CD4-positive, alpha-beta memory T cell (primary cell): ENCODE measurements at regions of chr14 and their contacts with region 1.

Region 1: DNA sequence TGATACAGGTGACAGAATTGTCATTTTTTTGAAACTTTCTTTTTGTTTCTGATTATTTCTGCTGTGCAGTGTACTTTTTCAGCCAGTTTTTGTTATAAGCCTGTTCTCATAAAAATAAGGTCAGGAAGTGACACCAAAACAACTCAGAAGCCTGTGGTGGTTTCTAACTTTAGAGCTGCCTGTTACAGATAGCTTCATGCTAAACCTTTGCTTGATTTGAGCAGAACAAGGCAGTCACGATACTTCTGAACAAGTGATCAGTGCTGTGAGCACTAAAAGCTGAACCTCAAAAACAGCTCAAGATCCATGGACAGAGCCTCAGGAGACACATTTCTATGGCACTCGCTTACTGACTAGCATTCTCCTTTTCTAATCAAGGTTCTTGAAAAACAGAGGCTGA is 82.0 kb downstream of the PRKCH start:
- DNase-seq: peak; percentile 49 to 69 (median 59)
- H3K4me3 ChIP-seq: no peak overlapping the region
- H3K4me3 Mint-ChIP-seq: peak overlapping the region; percentile 59 to 88 (median 70)
- H3K27ac ChIP-seq: peak overlapping the region; percentile 52
- H3K27ac Mint-ChIP-seq: peak overlapping the region; percentile 65 to 97 (median 93)
- H3K4me1 ChIP-seq: peaks cover 96% of the 10 kb centered on the region
- H3K4me1 Mint-ChIP-seq: peaks cover 65 to 90% (median 78%) of the 10 kb centered on the region in 4 donors
- H3K27me3 ChIP-seq: no peaks in the 10 kb centered on the region
- H3K27me3 Mint-ChIP-seq: no peaks in the 10 kb centered on the region

Region 2: GRCh38 chr14:61335671-61336275 is 67.6 kb before region 1 on chr14:
- CTCF ChIA-PET with region 1: interaction called, 8 read pairs
- POLR2A ChIA-PET with region 1: interaction called, 21 read pairs
- intact Hi-C with region 1: no loop called
- DNase-seq: peak; percentile 65 to 78 (median 73)
- H3K4me3 ChIP-seq: peak overlapping the region; percentile 2 to 25
- H3K4me3 Mint-ChIP-seq: peak overlapping the region; percentile 78 to 87 (median 84)
- H3K27ac ChIP-seq: peak overlapping the region; percentile 84
- H3K27ac Mint-ChIP-seq: peak overlapping the region; percentile 93 to 100 (median 99)
- H3K4me1 ChIP-seq: peaks cover 94% of the 10 kb centered on the region
- H3K4me1 Mint-ChIP-seq: peaks cover 70 to 85% (median 78%) of the 10 kb centered on the region in 4 donors
- H3K27me3 ChIP-seq: no peaks in the 10 kb centered on the region
- H3K27me3 Mint-ChIP-seq: no peaks in the 10 kb centered on the region

Region 3: DNA sequence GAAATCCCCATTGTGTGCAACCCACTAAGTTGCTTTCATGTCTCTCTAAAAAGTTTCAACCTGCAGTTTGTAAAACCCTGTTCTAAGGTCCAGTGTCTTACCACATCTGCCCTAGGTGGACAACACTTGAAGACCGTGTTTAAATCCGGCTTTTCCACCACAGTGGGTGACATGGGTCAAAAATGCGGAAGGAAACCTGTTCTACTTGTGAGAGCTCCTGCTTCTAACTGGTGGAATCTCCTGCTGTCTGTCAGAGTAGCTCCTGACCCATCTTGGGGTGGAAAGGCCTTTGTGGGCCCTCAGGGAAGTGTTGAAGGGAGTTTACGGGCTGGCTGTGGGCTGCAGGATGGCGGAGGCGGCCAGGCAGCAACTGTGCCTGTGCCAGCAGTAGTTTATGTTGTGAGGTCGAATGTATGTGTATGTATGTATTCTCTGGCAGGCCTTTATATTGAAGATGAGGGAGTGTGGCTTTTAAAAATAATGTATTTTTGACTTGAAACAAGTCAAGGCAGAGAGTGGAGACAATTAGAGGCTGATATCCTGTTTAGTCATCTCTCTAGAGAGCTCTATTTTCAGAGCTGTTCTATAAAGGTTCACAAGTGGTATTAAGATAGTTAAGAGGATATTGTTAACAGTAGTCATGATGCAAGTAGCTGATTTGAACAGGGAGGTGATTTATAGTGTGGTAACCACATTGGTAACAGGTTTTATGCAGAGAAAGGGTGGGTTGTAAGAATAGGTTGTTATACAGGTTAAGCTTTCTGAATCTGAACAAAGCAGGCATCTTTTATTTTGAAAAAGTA is 15.0 kb before region 1 on chr14:
- CTCF ChIA-PET with region 1: interaction called, 22 read pairs
- POLR2A ChIA-PET with region 1: interaction called, 85 read pairs
- intact Hi-C with region 1: loop called (anchors 1 kb)
- DNase-seq: peak; percentile 50 to 69 (median 61)
- H3K4me3 ChIP-seq: peak overlapping the region in 1 of 2 donors; percentile 26
- H3K4me3 Mint-ChIP-seq: peak overlapping the region in 2 of 8 donors; percentile 72 to 78
- H3K27ac ChIP-seq: peak overlapping the region; percentile 65
- H3K27ac Mint-ChIP-seq: no peak overlapping the region
- H3K4me1 ChIP-seq: peaks cover 100% of the 10 kb centered on the region
- H3K4me1 Mint-ChIP-seq: peaks cover 0 to 50% (median 20%) of the 10 kb centered on the region in 4 donors
- H3K27me3 ChIP-seq: no peaks in the 10 kb centered on the region
- H3K27me3 Mint-ChIP-seq: no peaks in the 10 kb centered on the region

Region 4: GRCh38 chr14:61420326-61420725 is 16.9 kb after region 1 on chr14:
- CTCF ChIA-PET with region 1: interaction called, 4 read pairs
- POLR2A ChIA-PET with region 1: interaction called, 6 read pairs
- intact Hi-C with region 1: loop called (anchors 2 kb)
- DNase-seq: peak in 1 of 5 donors; percentile 65
- H3K4me3 ChIP-seq: no peak overlapping the region
- H3K4me3 Mint-ChIP-seq: peak overlapping the region in 7 of 8 donors; percentile 25 to 74 (median 45)
- H3K27ac ChIP-seq: no peak overlapping the region
- H3K27ac Mint-ChIP-seq: peak overlapping the region in 6 of 7 donors; percentile 54 to 82 (median 71)
- H3K4me1 ChIP-seq: peaks cover 100% of the 10 kb centered on the region
- H3K4me1 Mint-ChIP-seq: peaks cover 5 to 82% (median 42%) of the 10 kb centered on the region in 4 donors
- H3K27me3 ChIP-seq: no peaks in the 10 kb centered on the region
- H3K27me3 Mint-ChIP-seq: no peaks in the 10 kb centered on the region

Region 5: GRCh38 chr14:61438860-61439684 is 35.7 kb after region 1 on chr14:
- CTCF ChIA-PET with region 1: interaction called, 3 read pairs
- POLR2A ChIA-PET with region 1: interaction called, 6 read pairs
- intact Hi-C with region 1: loop called (anchors 5 kb)
- DNase-seq: peak; percentile 36 to 74 (median 42)
- H3K4me3 ChIP-seq: peak overlapping the region in 1 of 2 donors; percentile 26
- H3K4me3 Mint-ChIP-seq: peak overlapping the region; percentile 78 to 87 (median 82)
- H3K27ac ChIP-seq: peak overlapping the region; percentile 20
- H3K27ac Mint-ChIP-seq: peak overlapping the region; percentile 89 to 98 (median 96)
- H3K4me1 ChIP-seq: peaks cover 98% of the 10 kb centered on the region
- H3K4me1 Mint-ChIP-seq: peaks cover 74 to 97% (median 85%) of the 10 kb centered on the region in 4 donors
- H3K27me3 ChIP-seq: no peaks in the 10 kb centered on the region
- H3K27me3 Mint-ChIP-seq: no peaks in the 10 kb centered on the region